ENCODE measurements at regions of chr11 and their contacts with region 1.

Region 1: GRCh38 chr11:118227865-118228785 is 3.3 kb upstream of the JAML start:
- DNase-seq: peak in 2 of 5 donors; percentile 67
- H3K4me3 ChIP-seq: no peak overlapping the region
- H3K4me3 Mint-ChIP-seq: peak overlapping the region in 5 of 7 donors; percentile 65 to 89 (median 76)
- H3K27ac ChIP-seq: peak overlapping the region; percentile 26
- H3K27ac Mint-ChIP-seq: peak overlapping the region in 3 of 8 donors; percentile 78 to 97 (median 97)
- H3K4me1 ChIP-seq: peaks cover 67% of the 10 kb centered on the region
- H3K4me1 Mint-ChIP-seq: peaks cover 0 to 51% (median 9%) of the 10 kb centered on the region in 3 donors
- H3K27me3 ChIP-seq: no peaks in the 10 kb centered on the region
- H3K27me3 Mint-ChIP-seq: no peaks in the 10 kb centered on the region

Region 2: DNA sequence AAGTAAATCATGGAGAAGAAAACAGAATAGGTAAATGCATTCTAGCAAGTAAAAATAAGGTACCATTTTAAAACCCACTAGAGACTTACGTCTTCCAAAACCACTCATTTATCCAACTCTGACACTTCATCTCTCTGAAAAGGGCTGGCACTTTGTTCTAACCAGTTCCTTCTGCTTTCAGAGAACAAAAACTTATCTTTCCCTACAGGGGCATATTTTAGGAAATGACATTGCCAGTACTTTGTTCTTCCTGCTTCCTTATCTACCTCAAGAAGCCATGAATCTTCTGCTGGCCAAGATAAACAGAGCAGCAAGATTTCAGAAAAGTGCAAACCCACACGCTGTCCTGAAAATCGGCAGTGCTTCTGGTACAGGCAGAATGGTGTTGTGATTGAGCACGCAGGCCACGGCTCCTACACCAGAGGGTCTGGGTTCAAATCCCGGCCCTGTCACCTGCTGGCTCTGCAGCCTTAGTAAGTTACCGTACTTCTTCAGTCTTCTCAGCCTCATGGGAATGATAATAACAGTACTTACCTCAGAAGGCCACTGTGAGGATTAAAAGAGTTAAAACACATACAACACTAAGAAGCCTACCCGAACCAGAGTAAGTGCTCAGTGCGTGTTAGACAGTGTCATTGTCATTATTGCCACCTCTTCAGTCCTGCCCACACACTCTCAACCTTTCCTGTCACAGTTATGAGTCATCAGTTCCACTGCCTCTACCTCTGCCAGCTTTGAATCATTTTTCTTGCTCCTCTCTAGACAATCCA is 13.1 kb after region 1 on chr11:
- CTCF ChIA-PET with region 1: interaction called, 7 read pairs
- POLR2A ChIA-PET with region 1: interaction called, 27 read pairs
- DNase-seq: peak; percentile 36 to 82 (median 45)
- H3K4me3 ChIP-seq: peak overlapping the region; percentile 22
- H3K4me3 Mint-ChIP-seq: peak overlapping the region; percentile 51 to 87 (median 75)
- H3K27ac ChIP-seq: peak overlapping the region; percentile 64
- H3K27ac Mint-ChIP-seq: peak overlapping the region; percentile 88 to 96 (median 94)
- H3K4me1 ChIP-seq: peaks cover 50% of the 10 kb centered on the region
- H3K4me1 Mint-ChIP-seq: peaks cover 72 to 97% (median 90%) of the 10 kb centered on the region in 3 donors
- H3K27me3 ChIP-seq: no peaks in the 10 kb centered on the region
- H3K27me3 Mint-ChIP-seq: peaks cover 0 to 2% of the 10 kb centered on the region in 2 donors

Region 3: DNA sequence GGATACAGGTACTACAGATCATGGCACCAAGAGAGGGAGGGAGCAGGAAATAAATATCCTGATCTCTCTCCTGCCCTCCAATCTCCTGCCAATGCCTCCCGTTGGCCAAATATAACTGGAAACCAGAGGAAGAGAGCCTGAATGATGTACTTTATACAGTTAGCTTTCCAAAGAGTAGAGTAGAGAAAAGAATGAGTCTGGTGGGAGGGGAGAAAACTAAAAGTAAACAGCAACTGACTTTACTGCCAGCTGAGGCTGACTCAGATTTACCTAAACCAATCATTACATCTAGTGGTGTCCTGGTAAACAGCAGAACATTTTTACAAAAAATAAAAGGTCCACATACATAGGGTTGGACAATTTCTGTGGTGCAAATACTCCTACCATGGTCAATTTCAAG is 18.9 kb after region 1 on chr11:
- CTCF ChIA-PET with region 1: interaction called, 7 read pairs
- POLR2A ChIA-PET with region 1: interaction called, 27 read pairs
- DNase-seq: no peak
- H3K4me3 ChIP-seq: no peak overlapping the region
- H3K4me3 Mint-ChIP-seq: peak overlapping the region in 6 of 7 donors; percentile 0 to 58 (median 18)
- H3K27ac ChIP-seq: peak overlapping the region; percentile 20
- H3K27ac Mint-ChIP-seq: peak overlapping the region; percentile 51 to 94 (median 89)
- H3K4me1 ChIP-seq: peaks cover 35% of the 10 kb centered on the region
- H3K4me1 Mint-ChIP-seq: peaks cover 70 to 90% (median 88%) of the 10 kb centered on the region in 3 donors
- H3K27me3 ChIP-seq: no peaks in the 10 kb centered on the region
- H3K27me3 Mint-ChIP-seq: peaks cover 0 to 2% of the 10 kb centered on the region in 2 donors

Region 4: DNA sequence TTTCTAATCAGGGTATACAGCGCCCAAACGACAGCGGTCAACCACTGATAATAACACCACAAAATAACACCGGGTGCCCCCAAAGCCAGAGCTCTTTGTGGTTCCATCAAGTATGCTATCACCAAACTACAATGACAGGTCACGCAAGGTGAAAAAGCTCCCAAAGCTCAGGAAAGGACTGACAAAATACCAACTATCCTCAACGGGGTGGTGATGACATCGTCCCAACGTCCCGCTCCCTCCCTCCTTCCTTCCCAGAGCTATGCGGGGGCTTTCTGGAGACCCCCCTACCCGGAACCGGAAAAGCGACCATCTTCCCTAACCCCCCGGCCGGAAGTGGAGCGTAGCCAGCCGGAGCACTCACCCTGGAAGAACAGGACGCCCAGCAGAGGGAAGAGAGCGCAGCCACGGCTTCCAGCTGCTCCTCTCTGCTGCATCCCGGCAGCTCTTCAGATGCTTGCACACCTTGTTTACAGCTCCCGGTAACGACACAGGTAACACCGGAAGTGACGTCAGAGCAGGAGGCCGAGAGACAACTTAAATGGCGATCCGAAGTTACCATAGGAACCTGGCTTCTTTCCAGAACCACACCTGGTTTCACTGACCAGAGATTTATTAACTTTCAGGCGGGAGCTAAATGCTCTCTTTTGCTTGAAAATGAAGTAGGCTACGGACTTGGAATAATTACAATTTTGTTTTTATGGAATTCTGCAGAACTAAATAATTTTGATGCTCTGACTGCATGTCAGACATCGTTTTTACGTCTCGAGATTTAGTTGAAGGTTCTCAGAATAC is 23.9 kb after region 1 on chr11 and contains the start of gene MPZL3:
- CTCF ChIA-PET with region 1: interaction called, 3 read pairs
- POLR2A ChIA-PET with region 1: interaction called, 12 read pairs
- DNase-seq: peak; percentile 69 to 93 (median 90)
- H3K4me3 ChIP-seq: peak within 1 kb of the TSS; percentile 90
- H3K4me3 Mint-ChIP-seq: peak within 1 kb of the TSS; percentile 97 to 99 (median 98)
- H3K27ac ChIP-seq: peak within 1 kb of the TSS; percentile 98
- H3K27ac Mint-ChIP-seq: peak within 1 kb of the TSS; percentile 98 to 100 (median 99)
- H3K4me1 ChIP-seq: peaks cover 27% of the 10 kb centered on the region
- H3K4me1 Mint-ChIP-seq: peaks cover 43 to 51% (median 50%) of the 10 kb centered on the region in 3 donors
- H3K27me3 ChIP-seq: no peaks in the 10 kb centered on the region
- H3K27me3 Mint-ChIP-seq: peaks cover 0 to 3% of the 10 kb centered on the region in 2 donors
- total RNA-seq, gene MPZL3: 113 to 119 TPM

Region 5: GRCh38 chr11:118295834-118296454 is 67.8 kb after region 1 on chr11:
- CTCF ChIA-PET with region 1: interaction called, 10 read pairs
- POLR2A ChIA-PET with region 1: interaction called, 3 read pairs
- DNase-seq: peak in 3 of 5 donors; percentile 45 to 68 (median 53)
- H3K4me3 ChIP-seq: no peak overlapping the region
- H3K4me3 Mint-ChIP-seq: no peak overlapping the region
- H3K27ac ChIP-seq: no peak overlapping the region
- H3K27ac Mint-ChIP-seq: peak overlapping the region; percentile 34 to 85 (median 74)
- H3K4me1 ChIP-seq: peaks cover 8% of the 10 kb centered on the region
- H3K4me1 Mint-ChIP-seq: peaks cover 12 to 20% (median 17%) of the 10 kb centered on the region in 3 donors
- H3K27me3 ChIP-seq: no peaks in the 10 kb centered on the region
- H3K27me3 Mint-ChIP-seq: no peaks in the 10 kb centered on the region